Caco-2 (cell line): ENCODE measurements at regions of chr3 and their contacts with region 1.

Region 1: GRCh38 chr3:162437480-162437879 is 940.9 kb downstream of the OTOL1 start:
- DNase-seq: no peak
- H3K4me3 ChIP-seq: no peak overlapping the region
- H3K4me3 Mint-ChIP-seq: no peak overlapping the region
- H3K27ac Mint-ChIP-seq: no peak overlapping the region
- H3K4me1 ChIP-seq: no peaks in the 10 kb centered on the region
- H3K4me1 Mint-ChIP-seq: no peaks in the 10 kb centered on the region
- H3K27me3 ChIP-seq: no peaks in the 10 kb centered on the region
- H3K27me3 Mint-ChIP-seq: peaks cover 6% of the 10 kb centered on the region
- CTCF ChIP-seq: no peak

Region 2: GRCh38 chr3:162418153-162418552 is 19.3 kb before region 1 on chr3:
- CTCF ChIA-PET with region 1: no interaction called
- POLR2A ChIA-PET with region 1: no interaction called
- intact Hi-C with region 1: loop called (anchors 1 kb)
- DNase-seq: no peak
- H3K4me3 ChIP-seq: no peak overlapping the region
- H3K4me3 Mint-ChIP-seq: no peak overlapping the region
- H3K27ac Mint-ChIP-seq: no peak overlapping the region
- H3K4me1 ChIP-seq: no peaks in the 10 kb centered on the region
- H3K4me1 Mint-ChIP-seq: no peaks in the 10 kb centered on the region
- H3K27me3 ChIP-seq: no peaks in the 10 kb centered on the region
- H3K27me3 Mint-ChIP-seq: no peaks in the 10 kb centered on the region
- CTCF ChIP-seq: no peak